Sigmoid colon (tissue), 7 donors: ENCODE measurements at regions of chr17 and their contacts with region 1.

Region 1: DNA sequence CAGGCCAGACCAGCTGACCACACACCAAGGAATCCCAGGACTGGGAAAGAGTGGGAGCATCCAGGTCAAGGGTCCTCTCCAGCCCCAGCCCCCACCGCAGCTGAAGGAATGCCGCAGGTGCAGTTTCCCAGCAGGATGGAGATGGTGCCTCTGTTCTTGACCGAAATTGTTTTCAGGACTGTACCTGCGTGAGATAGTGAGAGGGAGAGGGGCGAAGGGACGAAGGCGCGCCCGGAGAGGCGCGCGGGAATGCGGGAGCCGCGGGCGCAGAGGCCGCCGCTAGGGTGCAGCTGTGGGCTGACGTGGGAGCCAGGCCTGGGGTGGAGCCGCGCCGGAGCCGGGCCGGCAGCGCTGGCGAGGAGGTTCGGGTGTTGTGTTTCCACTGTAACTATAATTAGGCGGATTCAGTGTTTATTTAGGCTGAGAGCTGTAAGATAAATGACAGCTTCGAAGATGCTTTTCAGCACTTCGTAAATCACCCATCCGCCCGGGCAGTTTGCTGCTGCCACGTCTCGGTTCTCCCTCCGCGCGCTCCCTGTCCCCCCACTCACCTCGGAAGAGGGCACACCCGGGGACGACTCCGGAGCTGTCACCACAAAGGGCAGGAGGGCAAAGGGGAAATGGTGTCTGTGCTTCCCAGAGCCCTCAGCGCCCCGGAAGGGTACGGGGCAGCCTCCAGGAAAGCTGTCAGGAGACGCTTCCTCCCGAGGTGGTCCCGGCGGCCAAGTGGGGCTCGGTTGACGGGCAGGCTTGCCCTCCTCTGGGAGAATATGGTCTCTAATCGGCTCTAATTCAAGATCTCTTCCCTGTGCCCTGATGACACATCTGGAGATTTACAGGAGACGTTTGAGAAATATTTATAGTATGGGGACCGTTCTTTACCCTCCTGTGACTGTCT is 38.2 kb downstream of the HOXB1 start:
- DNase-seq: peak; percentile 91
- H3K4me3 ChIP-seq: peak overlapping the region; percentile 1 to 41 (median 32)
- H3K27ac ChIP-seq: peak overlapping the region in 3 of 4 donors; percentile 63 to 67 (median 65)
- H3K4me1 ChIP-seq: peaks cover 0 to 26% (median 22%) of the 10 kb centered on the region in 4 donors
- H3K27me3 ChIP-seq: no peaks in the 10 kb centered on the region
- CTCF ChIP-seq: peak; percentile 82 to 94 (median 88)
- EP300 ChIP-seq: no peak
- POLR2A ChIP-seq: no peak

Region 2: GRCh38 chr17:48351831-48352332 is 140.8 kb before region 1 on chr17:
- intact Hi-C with region 1: loop called (anchors 5 kb)
- DNase-seq: no peak
- H3K4me3 ChIP-seq: no peak overlapping the region
- H3K27ac ChIP-seq: no peak overlapping the region
- H3K4me1 ChIP-seq: no peaks in the 10 kb centered on the region
- H3K27me3 ChIP-seq: peaks cover 0 to 5% (median 0%) of the 10 kb centered on the region in 3 donors
- CTCF ChIP-seq: peak; percentile 52 to 71 (median 68)
- EP300 ChIP-seq: no peak
- POLR2A ChIP-seq: no peak

Region 3: DNA sequence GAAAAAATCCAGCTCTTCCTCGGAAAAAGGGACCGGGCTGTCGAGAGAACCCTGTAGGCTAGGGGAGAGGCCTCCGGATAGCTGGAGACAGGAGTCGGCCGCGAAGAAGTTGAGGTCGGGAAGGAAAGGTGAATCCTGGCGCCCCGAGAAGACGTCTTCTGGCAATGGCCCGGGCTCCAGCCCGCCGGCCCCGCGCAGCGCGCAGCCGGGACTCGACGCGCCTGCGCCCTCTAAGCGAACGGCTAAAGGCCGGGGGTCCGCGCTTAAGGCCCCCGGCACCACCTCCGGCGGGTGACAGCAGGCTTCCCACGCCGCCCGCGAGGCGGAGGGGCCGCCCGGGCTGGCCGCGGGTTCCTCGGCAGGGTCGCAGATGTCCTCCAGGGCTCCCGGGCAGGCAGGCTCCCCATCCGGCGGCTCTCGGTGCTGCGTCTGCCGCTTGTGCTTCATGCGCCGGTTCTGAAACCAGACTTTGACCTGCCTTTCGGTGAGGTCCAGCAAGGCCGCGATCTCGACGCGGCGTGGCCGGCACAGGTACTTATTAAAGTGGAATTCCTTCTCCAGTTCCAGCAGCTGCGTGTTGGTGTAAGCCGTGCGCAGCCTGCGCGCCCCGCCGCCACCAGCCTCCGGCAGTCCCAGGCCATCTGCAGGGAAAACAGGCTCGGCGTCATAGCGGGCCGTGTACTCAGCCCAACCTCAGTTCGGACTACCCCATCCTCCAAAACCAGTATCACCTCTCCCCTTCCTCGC is 50.6 kb after region 1 on chr17:
- intact Hi-C with region 1: loop called (anchors 2 kb)
- DNase-seq: peak; percentile 83
- H3K4me3 ChIP-seq: peak overlapping the region; percentile 72 to 87 (median 84)
- H3K27ac ChIP-seq: peak overlapping the region; percentile 94 to 99 (median 96)
- H3K4me1 ChIP-seq: peaks cover 0 to 52% (median 49%) of the 10 kb centered on the region in 4 donors
- H3K27me3 ChIP-seq: no peaks in the 10 kb centered on the region
- CTCF ChIP-seq: peak in 2 of 4 experiments; percentile 15 to 41
- EP300 ChIP-seq: no peak
- POLR2A ChIP-seq: no peak

Region 4: DNA sequence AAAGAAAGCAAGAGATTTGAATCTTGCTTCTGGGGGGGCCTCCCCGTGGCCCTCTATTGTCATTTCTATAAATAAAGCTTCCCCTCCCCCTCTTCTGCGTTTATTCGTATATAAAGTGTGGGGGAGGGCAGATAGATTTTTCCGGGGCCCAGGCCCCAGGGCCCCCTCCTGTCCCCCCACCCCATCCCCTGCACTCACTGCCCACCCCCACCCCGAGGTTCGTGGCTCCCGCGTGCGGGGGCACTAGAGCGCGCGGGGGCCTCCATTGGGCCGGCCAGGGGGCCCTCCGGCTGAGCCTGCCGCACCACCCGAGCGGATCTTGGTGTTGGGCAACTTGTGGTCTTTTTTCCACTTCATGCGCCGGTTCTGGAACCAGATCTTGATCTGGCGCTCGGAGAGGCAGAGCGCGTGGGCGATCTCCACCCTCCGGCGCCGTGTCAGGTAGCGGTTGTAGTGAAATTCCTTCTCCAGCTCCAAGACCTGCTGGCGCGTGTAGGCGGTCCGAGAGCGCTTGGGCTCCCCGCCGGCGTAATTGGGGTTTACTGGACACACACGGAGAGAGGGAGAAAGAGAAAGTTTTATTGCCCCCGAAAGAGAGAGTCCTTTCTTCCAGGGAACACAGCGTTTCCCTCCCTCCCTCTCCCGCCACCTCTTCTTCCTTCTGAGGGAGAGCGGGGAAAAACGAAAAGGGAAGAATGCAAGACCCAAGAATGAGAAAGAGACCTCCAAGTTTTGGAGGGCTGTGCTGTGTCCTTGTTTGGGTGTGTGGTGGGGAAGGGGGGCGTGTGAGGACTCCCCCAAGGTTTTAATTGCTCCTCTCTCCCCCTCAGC is 84.0 kb after region 1 on chr17:
- intact Hi-C with region 1: no loop called
- DNase-seq: peak; percentile 92
- H3K4me3 ChIP-seq: peak overlapping the region; percentile 66 to 84 (median 70)
- H3K27ac ChIP-seq: peak overlapping the region; percentile 94 to 99 (median 96)
- H3K4me1 ChIP-seq: peaks cover 0 to 80% (median 62%) of the 10 kb centered on the region in 4 donors
- H3K27me3 ChIP-seq: no peaks in the 10 kb centered on the region
- CTCF ChIP-seq: no peak
- EP300 ChIP-seq: no peak
- POLR2A ChIP-seq: peak in 1 of 2 donors; percentile 44

Region 5: DNA sequence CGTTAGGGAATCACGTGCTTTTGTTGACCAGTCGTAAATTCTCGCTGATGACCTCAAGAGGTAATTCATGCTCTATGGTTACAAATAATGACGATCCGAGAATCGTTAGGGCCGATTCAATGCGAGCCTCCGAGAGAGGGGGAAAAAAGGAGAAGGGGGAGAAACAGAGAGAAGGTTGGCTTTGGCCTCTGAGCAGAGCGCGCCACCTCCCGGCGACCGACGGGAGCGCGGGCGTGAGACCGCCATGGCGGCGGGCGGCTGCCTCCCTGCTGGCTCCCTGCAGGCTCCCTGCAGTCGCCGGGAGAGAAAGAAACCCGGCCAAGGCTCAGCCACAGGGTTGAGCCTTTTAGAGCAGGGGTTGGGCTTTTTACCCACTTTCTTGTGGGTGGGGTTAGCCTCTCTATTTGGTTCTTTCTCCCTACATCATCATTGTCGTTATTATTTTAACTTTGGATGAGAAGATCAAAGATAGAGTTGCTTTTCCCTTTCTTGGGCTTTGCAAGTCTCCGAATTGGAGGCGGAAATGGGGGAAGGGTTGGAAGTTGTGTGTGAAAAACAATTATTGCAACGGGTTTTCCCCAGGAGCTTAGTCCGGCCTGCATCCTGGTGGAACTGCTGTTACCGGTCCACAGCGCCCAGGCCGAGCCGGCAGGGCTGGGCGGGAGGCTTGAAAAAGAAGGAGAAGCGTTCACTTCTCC is 101.3 kb after region 1 on chr17:
- intact Hi-C with region 1: loop called (anchors 2 kb)
- DNase-seq: peak; percentile 92
- H3K4me3 ChIP-seq: peak overlapping the region; percentile 36 to 70 (median 56)
- H3K27ac ChIP-seq: peak overlapping the region in 3 of 4 donors; percentile 95 to 99 (median 97)
- H3K4me1 ChIP-seq: peaks cover 0 to 61% (median 52%) of the 10 kb centered on the region in 4 donors
- H3K27me3 ChIP-seq: peaks cover 0 to 7% (median 0%) of the 10 kb centered on the region in 3 donors
- CTCF ChIP-seq: peak; percentile 90 to 94 (median 92)
- EP300 ChIP-seq: no peak
- POLR2A ChIP-seq: no peak